Naive thymus-derived CD4-positive, alpha-beta T cell (primary cell): ENCODE measurements at regions of chr22 and their contacts with region 1.

Region 1: GRCh38 chr22:45268958-45269844 is 15.5 kb upstream of the UPK3A start:
- DNase-seq: peak; percentile 82 to 99 (median 90)
- ATAC-seq: peak; percentile 100
- H3K4me3 ChIP-seq: peak overlapping the region; percentile 85
- H3K4me3 Mint-ChIP-seq: peak overlapping the region; percentile 71 to 86 (median 84)
- H3K27ac ChIP-seq: peak overlapping the region; percentile 28
- H3K27ac Mint-ChIP-seq: peak overlapping the region; percentile 43 to 85 (median 72)
- H3K4me1 ChIP-seq: peaks cover 4% of the 10 kb centered on the region in 2 donors
- H3K4me1 Mint-ChIP-seq: peaks cover 4 to 11% (median 8%) of the 10 kb centered on the region in 7 donors
- H3K27me3 ChIP-seq: no peaks in the 10 kb centered on the region
- H3K27me3 Mint-ChIP-seq: peaks cover 0 to 55% (median 0%) of the 10 kb centered on the region in 5 donors

Region 2: GRCh38 chr22:45344334-45344733 is 75.1 kb after region 1 on chr22:
- CTCF ChIA-PET with region 1: interaction called, 3 read pairs
- POLR2A ChIA-PET with region 1: no interaction called
- intact Hi-C with region 1: loop called in 1 of 2 experiments (anchors 1 kb)
- DNase-seq: no peak
- ATAC-seq: no peak
- H3K4me3 ChIP-seq: no peak overlapping the region
- H3K4me3 Mint-ChIP-seq: no peak overlapping the region
- H3K27ac ChIP-seq: no peak overlapping the region
- H3K27ac Mint-ChIP-seq: peak overlapping the region in 8 of 9 donors; percentile 36 to 90 (median 76)
- H3K4me1 ChIP-seq: peaks cover 0 to 24% of the 10 kb centered on the region in 2 donors
- H3K4me1 Mint-ChIP-seq: peaks cover 5 to 42% (median 26%) of the 10 kb centered on the region in 7 donors
- H3K27me3 ChIP-seq: no peaks in the 10 kb centered on the region
- H3K27me3 Mint-ChIP-seq: no peaks in the 10 kb centered on the region

Region 3: DNA sequence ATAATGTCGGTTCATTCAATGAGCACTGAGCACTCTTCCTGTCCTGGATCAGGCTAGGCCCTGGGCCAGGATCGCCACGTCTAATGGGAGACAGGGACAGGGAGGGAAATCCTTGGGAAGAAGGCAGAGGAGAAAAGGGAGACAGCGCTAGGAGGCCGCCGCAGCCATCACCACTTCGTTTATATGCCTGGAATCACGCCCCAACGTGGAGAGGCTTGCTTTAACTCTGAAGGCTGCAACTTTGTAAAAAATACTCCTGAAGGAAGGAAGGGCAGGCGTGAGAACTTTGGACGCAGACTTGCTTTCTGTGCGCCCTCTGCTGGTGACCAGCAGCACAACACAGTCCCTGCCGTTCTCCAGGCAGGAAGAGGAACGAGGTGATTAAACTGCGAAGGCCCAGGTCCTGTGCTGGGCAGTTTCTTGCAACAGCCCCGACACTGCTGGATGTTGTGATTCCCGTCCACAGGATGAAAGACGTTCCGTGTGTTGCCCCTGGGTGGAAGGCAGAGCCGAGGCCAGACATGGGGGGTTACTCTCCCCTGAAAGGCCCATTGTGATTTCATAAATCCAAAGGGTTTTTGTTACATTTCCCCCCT is 166.4 kb after region 1 on chr22:
- CTCF ChIA-PET with region 1: interaction called, 5 read pairs
- POLR2A ChIA-PET with region 1: interaction called, 6 read pairs
- intact Hi-C with region 1: loop called (anchors 1 kb)
- DNase-seq: peak; percentile 60 to 79 (median 73)
- ATAC-seq: peak; percentile 93
- H3K4me3 ChIP-seq: no peak overlapping the region
- H3K4me3 Mint-ChIP-seq: peak overlapping the region in 5 of 10 donors; percentile 12 to 65 (median 32)
- H3K27ac ChIP-seq: no peak overlapping the region
- H3K27ac Mint-ChIP-seq: peak overlapping the region in 6 of 9 donors; percentile 31 to 71 (median 60)
- H3K4me1 ChIP-seq: peaks cover 2 to 6% of the 10 kb centered on the region in 2 donors
- H3K4me1 Mint-ChIP-seq: peaks cover 9 to 22% (median 13%) of the 10 kb centered on the region in 7 donors
- H3K27me3 ChIP-seq: no peaks in the 10 kb centered on the region
- H3K27me3 Mint-ChIP-seq: peaks cover 0 to 7% (median 0%) of the 10 kb centered on the region in 5 donors

Region 4: DNA sequence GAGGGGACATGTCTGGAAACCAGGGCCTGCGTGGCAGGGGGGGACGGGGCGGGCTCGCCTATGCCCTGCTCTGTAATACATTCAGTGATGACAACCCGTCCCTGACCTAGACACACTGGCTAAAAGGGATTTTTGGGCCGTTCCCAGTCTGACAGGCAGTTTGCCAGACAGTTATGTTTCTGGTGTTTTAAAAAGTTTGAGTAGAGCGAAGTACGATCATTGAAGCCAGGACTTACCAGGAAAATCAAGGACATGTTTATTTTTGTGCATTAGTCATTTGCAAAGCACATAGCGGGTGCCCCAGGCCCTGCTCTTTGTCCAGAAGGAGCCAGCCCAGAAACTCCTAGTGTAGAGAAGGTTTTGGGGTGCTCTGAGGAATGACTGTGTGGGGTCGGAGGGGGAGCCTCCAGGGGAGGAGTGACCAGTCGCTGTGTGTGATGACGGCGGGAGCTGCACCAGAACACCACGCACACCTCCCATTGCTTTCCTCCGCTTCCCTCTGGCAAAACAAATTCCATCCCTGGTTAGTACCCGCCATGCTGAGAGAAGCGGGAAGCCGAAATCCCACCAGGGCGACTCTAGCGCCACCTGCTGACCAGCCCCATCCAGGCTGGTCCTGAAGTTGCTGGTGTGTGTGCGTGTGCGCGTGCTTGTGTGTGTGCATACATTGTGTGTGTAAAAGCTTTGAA is 284.3 kb after region 1 on chr22:
- CTCF ChIA-PET with region 1: no interaction called
- POLR2A ChIA-PET with region 1: no interaction called
- intact Hi-C with region 1: loop called (anchors 1 to 2 kb)
- DNase-seq: peak; percentile 8 to 63 (median 30)
- ATAC-seq: peak; percentile 68
- H3K4me3 ChIP-seq: no peak overlapping the region
- H3K4me3 Mint-ChIP-seq: no peak overlapping the region
- H3K27ac ChIP-seq: no peak overlapping the region
- H3K27ac Mint-ChIP-seq: peak overlapping the region in 1 of 9 donors; percentile 47
- H3K4me1 ChIP-seq: no peaks in the 10 kb centered on the region
- H3K4me1 Mint-ChIP-seq: peaks cover 0 to 3% (median 0%) of the 10 kb centered on the region in 7 donors
- H3K27me3 ChIP-seq: no peaks in the 10 kb centered on the region
- H3K27me3 Mint-ChIP-seq: peaks cover 0 to 16% (median 4%) of the 10 kb centered on the region in 5 donors